Gastrocnemius medialis (tissue), 4 donors: ENCODE measurements at regions of chr1 and their contacts with region 1.

Region 1: GRCh38 chr1:235160957-235161684 is at the start of gene RBM34:
- DNase-seq: peak; percentile 83 to 89
- ATAC-seq: peak; percentile 97
- H3K4me3 ChIP-seq: peak within 1 kb of the TSS; percentile 81 to 94 (median 85)
- H3K27ac ChIP-seq: peak within 1 kb of the TSS; percentile 88 to 94 (median 88)
- H3K4me1 ChIP-seq: peaks cover 10 to 12% of the 10 kb centered on the region in 2 donors
- H3K27me3 ChIP-seq: no peaks in the 10 kb centered on the region
- CTCF ChIP-seq: peak in 3 of 5 experiments; percentile 36 to 55 (median 48)
- POLR2A ChIP-seq: peak; percentile 95 to 98
- total RNA-seq, gene RBM34: 44.8 to 136 (median 66.8) TPM

Region 2: DNA sequence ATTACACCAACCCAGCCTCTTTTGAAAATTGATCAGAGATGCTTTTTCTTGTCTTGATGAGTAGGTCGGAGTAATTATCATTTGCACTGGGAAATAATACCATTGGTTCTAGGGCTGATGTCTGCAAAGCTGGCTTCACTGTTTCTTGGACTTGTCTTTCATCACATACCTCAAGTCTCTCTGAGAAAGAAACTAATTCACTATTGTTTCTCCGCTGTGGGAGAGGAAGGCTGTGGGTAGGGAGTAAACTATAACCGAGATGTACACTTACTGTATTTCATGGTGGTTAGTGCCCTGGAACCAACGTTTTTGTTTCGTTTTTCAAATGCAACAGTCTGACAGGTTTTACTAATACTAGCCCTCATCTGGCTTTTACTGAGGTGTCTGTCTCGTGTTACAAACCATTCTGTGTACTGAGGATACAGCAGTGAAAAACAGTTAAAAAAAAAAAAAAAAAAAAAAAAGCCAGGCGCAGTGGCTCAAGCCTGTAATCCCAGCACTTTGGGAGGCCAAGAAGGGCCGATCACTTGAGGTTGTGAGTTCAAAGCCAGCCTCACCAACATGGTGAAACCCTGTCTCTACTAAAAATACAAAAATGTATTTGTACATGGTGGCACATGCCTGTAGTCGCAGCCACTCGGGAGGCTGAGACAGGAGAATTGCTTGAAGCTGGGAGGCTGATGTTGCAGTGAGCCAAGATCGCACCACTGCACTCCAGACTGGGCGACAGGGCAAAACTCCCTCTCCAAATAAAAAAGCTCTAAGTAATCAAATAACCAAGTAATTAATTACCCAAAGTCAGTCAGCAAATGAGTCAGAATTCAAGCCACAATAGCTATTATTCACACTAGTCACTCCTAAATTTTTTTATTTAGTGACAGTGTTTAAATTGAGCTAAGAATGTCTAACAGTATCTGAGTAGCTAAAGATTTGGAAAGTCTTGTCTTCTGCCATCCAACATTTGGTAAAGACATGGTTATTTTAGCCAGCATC is 55.8 kb before region 1 on chr1:
- in situ Hi-C with region 1: no loop called
- intact Hi-C with region 1: loop called (anchors 1 kb)
- DNase-seq: no peak
- ATAC-seq: no peak
- H3K4me3 ChIP-seq: no peak overlapping the region
- H3K27ac ChIP-seq: no peak overlapping the region
- H3K4me1 ChIP-seq: peaks cover 9 to 14% of the 10 kb centered on the region in 2 donors
- H3K27me3 ChIP-seq: no peaks in the 10 kb centered on the region
- CTCF ChIP-seq: no peak
- POLR2A ChIP-seq: no peak

Region 3: GRCh38 chr1:235128456-235129328 is 32.4 kb before region 1 on chr1 and contains the start of gene TOMM20:
- in situ Hi-C with region 1: no loop called
- intact Hi-C with region 1: loop called (anchors 1 kb)
- DNase-seq: peak; percentile 93 to 98
- ATAC-seq: peak; percentile 97
- H3K4me3 ChIP-seq: peak within 1 kb of the TSS; percentile 90 to 95 (median 94)
- H3K27ac ChIP-seq: peak within 1 kb of the TSS; percentile 86 to 92 (median 88)
- H3K4me1 ChIP-seq: peaks cover 15 to 18% of the 10 kb centered on the region in 2 donors
- H3K27me3 ChIP-seq: no peaks in the 10 kb centered on the region
- CTCF ChIP-seq: peak in 1 of 5 experiments; percentile 10
- POLR2A ChIP-seq: peak; percentile 61 to 72
- total RNA-seq, gene TOMM20: 51.7 to 71.8 (median 62.3) TPM